ENCODE measurements at regions of chr12 and their contacts with region 1.

Region 1: GRCh38 chr12:107917912-107918800 is 143.7 kb downstream of the ASCL4 start:
- DNase-seq: peak; percentile 69
- H3K4me3 ChIP-seq: no peak overlapping the region; a peak in 1 of 4 replicates
- H3K27ac ChIP-seq: no peak overlapping the region
- H3K4me1 ChIP-seq: no peaks in the 10 kb centered on the region; a peak in 1 of 4 replicates
- H3K27me3 ChIP-seq: no peaks in the 10 kb centered on the region
- CTCF ChIP-seq: peak; percentile 55
- EP300 ChIP-seq: no peak
- RAD21 ChIP-seq: peak; percentile 92

Region 2: DNA sequence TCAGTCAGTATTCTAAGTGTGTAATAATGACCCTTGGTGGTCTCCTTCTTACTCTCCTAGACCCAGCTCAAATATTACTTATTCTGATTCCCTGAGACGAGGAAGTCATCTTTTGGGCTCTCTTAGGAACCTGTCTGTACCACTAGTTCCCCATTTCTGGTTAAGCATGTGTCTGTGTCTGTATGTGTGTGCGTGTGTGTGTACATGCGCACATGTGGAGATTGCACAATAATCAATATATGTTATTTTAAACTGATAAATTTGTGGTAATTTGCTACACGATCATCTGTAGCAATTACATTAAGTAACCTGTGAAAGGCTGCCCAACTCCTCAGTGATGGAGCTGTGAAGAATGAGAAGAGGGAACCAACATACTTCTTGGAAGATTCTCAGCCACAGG is 11.4 kb before region 1 on chr12:
- CTCF ChIA-PET with region 1: interaction called, 21 read pairs
- POLR2A ChIA-PET with region 1: no interaction called
- DNase-seq: no peak
- H3K4me3 ChIP-seq: no peak overlapping the region
- H3K27ac ChIP-seq: no peak overlapping the region
- H3K4me1 ChIP-seq: peaks cover 0 to 3% of the 10 kb centered on the region in 2 experiments; a peak in 1 of 4 replicates
- H3K27me3 ChIP-seq: no peaks in the 10 kb centered on the region
- CTCF ChIP-seq: no peak
- EP300 ChIP-seq: no peak
- RAD21 ChIP-seq: no peak

Region 3: GRCh38 chr12:107929436-107929835 is 11.3 kb after region 1 on chr12:
- CTCF ChIA-PET with region 1: interaction called, 63 read pairs
- POLR2A ChIA-PET with region 1: no interaction called
- DNase-seq: peak; percentile 42
- H3K4me3 ChIP-seq: no peak overlapping the region
- H3K27ac ChIP-seq: no peak overlapping the region
- H3K4me1 ChIP-seq: no peaks in the 10 kb centered on the region
- H3K27me3 ChIP-seq: no peaks in the 10 kb centered on the region
- CTCF ChIP-seq: peak; percentile 33
- EP300 ChIP-seq: no peak
- RAD21 ChIP-seq: peak; percentile 64

Region 4: DNA sequence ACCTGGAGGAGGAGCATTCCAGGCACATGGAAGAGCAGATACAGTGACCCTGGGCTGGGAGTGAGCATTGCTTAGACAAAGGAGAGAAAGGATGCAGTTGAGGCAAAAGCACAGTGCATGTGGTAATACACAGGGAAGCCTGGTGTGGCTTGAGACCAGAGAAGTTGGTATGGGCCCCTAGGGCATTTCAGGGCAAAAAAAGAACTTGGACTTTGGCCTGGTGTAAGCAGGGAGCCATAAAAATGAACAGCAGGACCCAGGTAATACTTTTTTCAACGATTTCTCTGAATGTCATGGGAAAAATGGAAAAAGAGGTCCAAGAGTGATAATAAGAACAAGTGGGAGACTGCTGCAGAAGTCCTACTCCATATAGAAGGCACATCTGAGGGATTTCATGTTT is 20.3 kb after region 1 on chr12:
- CTCF ChIA-PET with region 1: interaction called, 63 read pairs
- POLR2A ChIA-PET with region 1: no interaction called
- DNase-seq: no peak
- H3K4me3 ChIP-seq: no peak overlapping the region
- H3K27ac ChIP-seq: no peak overlapping the region
- H3K4me1 ChIP-seq: peaks cover 0 to 3% of the 10 kb centered on the region in 2 experiments; a peak in 1 of 4 replicates
- H3K27me3 ChIP-seq: no peaks in the 10 kb centered on the region
- CTCF ChIP-seq: no peak
- EP300 ChIP-seq: no peak
- RAD21 ChIP-seq: no peak

Region 5: DNA sequence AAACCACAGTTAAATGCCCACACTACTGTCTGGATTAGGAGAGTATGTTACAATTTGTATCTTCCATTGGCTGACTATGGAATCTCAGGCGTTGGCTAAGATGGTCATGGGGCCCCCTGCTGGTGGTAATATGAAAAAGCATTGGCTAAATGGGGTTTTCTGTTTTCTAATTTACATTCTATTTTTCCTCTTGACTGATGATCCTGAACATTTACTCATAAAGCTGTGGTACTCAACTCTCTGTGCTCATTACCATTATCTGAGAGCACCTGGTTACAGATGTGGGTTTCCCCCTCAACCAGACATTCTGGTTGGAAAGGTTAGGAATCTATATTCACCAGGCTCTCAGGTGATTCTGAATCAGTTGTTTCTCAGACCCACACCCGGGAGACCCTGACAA is 275.8 kb after region 1 on chr12:
- CTCF ChIA-PET with region 1: interaction called, 19 read pairs
- POLR2A ChIA-PET with region 1: no interaction called
- DNase-seq: peak; percentile 69
- H3K4me3 ChIP-seq: no peak overlapping the region
- H3K27ac ChIP-seq: no peak overlapping the region; a peak in 1 of 4 replicates
- H3K4me1 ChIP-seq: peaks cover 0 to 29% of the 10 kb centered on the region in 2 experiments; a peak in 2 of 4 replicates
- H3K27me3 ChIP-seq: no peaks in the 10 kb centered on the region
- CTCF ChIP-seq: peak; percentile 62
- EP300 ChIP-seq: no peak
- RAD21 ChIP-seq: peak; percentile 81

Region 6: GRCh38 chr12:108514973-108515814 is 597.0 kb after region 1 on chr12 and contains the start of gene FICD:
- CTCF ChIA-PET with region 1: interaction called, 13 read pairs
- POLR2A ChIA-PET with region 1: no interaction called
- DNase-seq: peak; percentile 96
- H3K4me3 ChIP-seq: peak within 1 kb of the TSS; percentile 68 to 92
- H3K27ac ChIP-seq: peak within 1 kb of the TSS; percentile 40 to 41; a peak in 2 of 4 replicates
- H3K4me1 ChIP-seq: peaks cover 5 to 17% of the 10 kb centered on the region in 2 experiments; a peak in 1 of 4 replicates
- H3K27me3 ChIP-seq: no peaks in the 10 kb centered on the region
- CTCF ChIP-seq: no peak
- EP300 ChIP-seq: no peak
- RAD21 ChIP-seq: no peak
- polyA plus RNA-seq, gene FICD: 1.0 and 1.2 TPM in 2 replicates

Measured in SK-N-SH (cell line).